RWPE1 (cell line): ENCODE measurements at regions of chr2 and their contacts with region 1.

Region 1: DNA sequence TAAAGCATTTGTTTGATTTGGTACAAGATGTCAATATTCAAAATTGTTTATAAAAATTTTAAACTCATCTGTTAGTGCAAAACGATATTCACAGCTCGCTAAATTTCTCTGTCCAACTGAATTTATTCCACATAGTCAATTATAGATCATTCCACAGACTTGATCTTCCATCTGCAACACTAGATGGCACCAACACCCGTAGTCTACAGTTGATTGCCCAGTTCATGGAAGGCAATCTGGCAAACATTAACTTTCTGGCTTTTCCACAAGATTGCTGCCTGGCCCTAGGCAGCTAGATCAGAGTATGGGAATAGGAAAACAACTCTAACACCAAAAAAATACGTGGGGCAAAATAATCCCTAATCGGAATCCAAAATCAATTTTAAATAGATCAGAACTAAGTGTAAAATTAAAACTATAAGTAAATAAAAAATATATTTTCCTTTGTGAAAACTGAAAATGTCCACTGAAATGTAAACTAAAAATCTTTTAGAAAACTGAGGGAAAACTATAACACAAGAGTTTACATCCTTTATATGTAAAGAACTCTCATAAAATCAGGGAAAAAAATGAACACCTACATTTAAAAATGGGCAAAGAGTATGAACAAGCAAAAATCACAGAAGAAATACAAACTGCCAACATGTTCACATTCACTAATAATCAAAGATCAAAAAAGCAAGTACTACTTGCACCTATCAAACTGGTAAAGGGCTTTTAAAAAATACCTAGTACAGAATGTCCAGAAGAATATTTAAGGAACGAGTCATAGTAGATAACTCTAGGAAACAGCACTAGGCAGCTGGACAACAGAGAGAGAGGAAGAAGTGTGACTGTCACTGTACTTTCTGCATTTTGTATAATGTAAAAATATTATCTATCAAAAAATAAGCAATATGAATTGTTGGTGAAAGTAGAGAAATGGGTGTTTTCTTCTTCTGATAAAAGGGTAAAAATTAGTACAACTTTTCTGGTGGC is 35.0 kb downstream of the RTN4 start:
- DNase-seq: peak; percentile 56
- H3K27ac ChIP-seq: no peak overlapping the region
- CTCF ChIP-seq: peak; percentile 76

Region 2: GRCh38 chr2:54899576-54900200 is 115.6 kb before region 1 on chr2:
- CTCF ChIA-PET with region 1: interaction called, 14 read pairs
- POLR2A ChIA-PET with region 1: no interaction called
- DNase-seq: peak; percentile 26
- H3K27ac ChIP-seq: no peak overlapping the region
- CTCF ChIP-seq: peak; percentile 60